Naive thymus-derived CD4-positive, alpha-beta T cell (primary cell): ENCODE measurements at regions of chr20 and their contacts with region 1.

Region 1: DNA sequence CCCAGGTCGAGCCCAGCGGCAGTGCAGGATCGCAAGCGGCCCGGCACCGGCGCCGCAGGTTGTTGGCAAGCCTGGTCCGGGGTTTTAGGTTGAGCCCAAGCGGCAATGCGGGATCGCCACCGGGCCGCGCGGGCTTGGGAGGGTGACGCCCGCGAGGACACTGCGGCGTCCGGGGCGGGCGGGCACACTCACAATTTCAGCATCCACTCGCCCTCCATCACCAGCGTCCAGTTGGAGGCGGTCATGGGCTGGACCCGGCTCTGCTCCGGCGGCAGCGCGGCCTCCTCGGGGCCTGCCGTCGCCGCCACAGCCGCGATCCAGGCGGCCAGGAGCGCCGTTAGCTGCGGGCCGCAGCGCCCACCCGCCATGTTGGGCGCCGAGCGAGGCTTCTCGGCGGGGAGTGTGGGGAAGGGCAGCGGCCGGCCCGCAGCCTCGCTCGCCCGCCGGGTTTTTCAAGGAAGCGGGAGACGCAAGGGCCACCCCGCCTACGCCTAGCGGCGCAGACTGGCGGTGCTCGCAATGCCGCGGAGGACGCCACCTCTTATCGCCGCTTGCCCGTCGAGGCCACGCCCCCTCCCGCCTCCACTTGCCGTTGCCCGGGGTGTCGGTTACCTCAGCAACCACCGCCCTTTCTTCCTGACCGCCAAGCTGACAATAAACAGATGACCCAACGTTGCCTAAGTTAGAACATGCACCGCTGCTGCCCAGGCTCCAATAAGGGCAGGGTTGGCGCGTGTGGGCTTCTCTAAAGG is at the start of gene TMX4:
- DNase-seq: peak; percentile 70 to 95 (median 78)
- ATAC-seq: peak; percentile 94
- H3K4me3 ChIP-seq: peak within 1 kb of the TSS; percentile 82
- H3K4me3 Mint-ChIP-seq: peak within 1 kb of the TSS in 9 of 10 donors; percentile 87 to 96 (median 94)
- H3K27ac ChIP-seq: peak within 1 kb of the TSS; percentile 90
- H3K27ac Mint-ChIP-seq: peak within 1 kb of the TSS; percentile 78 to 97 (median 87)
- H3K4me1 ChIP-seq: peaks cover 24% of the 10 kb centered on the region in 2 donors
- H3K4me1 Mint-ChIP-seq: peaks cover 16 to 43% (median 40%) of the 10 kb centered on the region in 7 donors
- H3K27me3 ChIP-seq: no peaks in the 10 kb centered on the region
- H3K27me3 Mint-ChIP-seq: peaks cover 0 to 8% (median 0%) of the 10 kb centered on the region in 5 donors
- total RNA-seq, gene TMX4: 32.1 to 45.5 (median 39.7) TPM

Region 2: GRCh38 chr20:7818477-7818876 is 200.9 kb before region 1 on chr20:
- CTCF ChIA-PET with region 1: no interaction called
- POLR2A ChIA-PET with region 1: no interaction called
- intact Hi-C with region 1: no loop called
- DNase-seq: no peak
- ATAC-seq: no peak
- H3K4me3 ChIP-seq: no peak overlapping the region
- H3K4me3 Mint-ChIP-seq: no peak overlapping the region
- H3K27ac ChIP-seq: no peak overlapping the region
- H3K27ac Mint-ChIP-seq: no peak overlapping the region
- H3K4me1 ChIP-seq: no peaks in the 10 kb centered on the region
- H3K4me1 Mint-ChIP-seq: no peaks in the 10 kb centered on the region
- H3K27me3 ChIP-seq: no peaks in the 10 kb centered on the region
- H3K27me3 Mint-ChIP-seq: peaks cover 0 to 2% (median 0%) of the 10 kb centered on the region in 5 donors

Region 3: DNA sequence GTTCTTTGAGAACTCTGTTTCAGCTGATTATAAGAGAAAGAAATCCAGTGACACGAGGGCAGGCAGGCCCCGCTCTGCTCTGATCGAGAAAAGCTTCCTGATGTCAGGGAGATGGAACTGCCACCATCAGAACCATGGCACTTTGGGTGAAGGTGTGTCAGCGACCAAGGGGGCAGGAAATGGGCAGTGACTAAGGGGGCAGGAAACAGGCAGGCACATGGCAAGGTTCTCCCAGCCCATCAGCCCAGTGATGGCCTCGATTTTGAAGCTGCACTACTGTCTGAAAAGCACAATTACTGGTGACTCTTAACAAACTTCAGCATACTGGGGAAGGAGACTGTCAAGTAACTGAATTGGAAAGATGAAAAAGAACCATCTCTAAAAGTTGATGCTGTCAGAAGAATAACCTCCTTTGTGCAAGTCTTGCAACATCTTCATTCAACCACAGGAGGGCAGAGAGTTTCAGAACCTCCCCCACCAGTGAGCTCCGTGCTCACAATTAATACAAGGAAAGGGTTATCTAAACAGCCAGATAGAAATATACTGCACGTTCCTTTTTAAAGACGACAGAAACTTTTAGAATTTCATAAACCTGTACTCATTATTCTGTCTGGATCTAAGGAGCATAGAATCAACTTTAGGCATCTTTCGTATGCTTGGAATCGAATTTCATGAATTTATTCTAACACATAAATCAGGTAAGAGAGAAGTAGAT is 38.9 kb before region 1 on chr20:
- CTCF ChIA-PET with region 1: no interaction called
- POLR2A ChIA-PET with region 1: no interaction called
- intact Hi-C with region 1: loop called in 1 of 2 experiments (anchors 1 kb)
- DNase-seq: peak in 5 of 9 donors; percentile 0 to 21 (median 1)
- ATAC-seq: no peak
- H3K4me3 ChIP-seq: no peak overlapping the region
- H3K4me3 Mint-ChIP-seq: no peak overlapping the region
- H3K27ac ChIP-seq: no peak overlapping the region
- H3K27ac Mint-ChIP-seq: peak overlapping the region in 7 of 9 donors; percentile 19 to 78 (median 44)
- H3K4me1 ChIP-seq: no peaks in the 10 kb centered on the region
- H3K4me1 Mint-ChIP-seq: peaks cover 8 to 19% (median 10%) of the 10 kb centered on the region in 7 donors
- H3K27me3 ChIP-seq: no peaks in the 10 kb centered on the region
- H3K27me3 Mint-ChIP-seq: no peaks in the 10 kb centered on the region

Region 4: GRCh38 chr20:8007490-8007889 is 11.9 kb before region 1 on chr20:
- CTCF ChIA-PET with region 1: interaction called, 4 read pairs
- POLR2A ChIA-PET with region 1: interaction called, 3 read pairs
- intact Hi-C with region 1: loop called in 1 of 2 experiments (anchors 1 kb)
- DNase-seq: no peak
- ATAC-seq: no peak
- H3K4me3 ChIP-seq: no peak overlapping the region
- H3K4me3 Mint-ChIP-seq: no peak overlapping the region
- H3K27ac ChIP-seq: no peak overlapping the region
- H3K27ac Mint-ChIP-seq: no peak overlapping the region
- H3K4me1 ChIP-seq: no peaks in the 10 kb centered on the region
- H3K4me1 Mint-ChIP-seq: peaks cover 4 to 28% (median 13%) of the 10 kb centered on the region in 7 donors
- H3K27me3 ChIP-seq: no peaks in the 10 kb centered on the region
- H3K27me3 Mint-ChIP-seq: no peaks in the 10 kb centered on the region

Region 5: GRCh38 chr20:8043687-8044282 is 24.4 kb after region 1 on chr20:
- CTCF ChIA-PET with region 1: interaction called, 6 read pairs
- POLR2A ChIA-PET with region 1: no interaction called
- intact Hi-C with region 1: loop called in 1 of 2 experiments (anchors 1 kb)
- DNase-seq: peak in 7 of 9 donors; percentile 35 to 73 (median 58)
- ATAC-seq: peak; percentile 87
- H3K4me3 ChIP-seq: no peak overlapping the region
- H3K4me3 Mint-ChIP-seq: no peak overlapping the region
- H3K27ac ChIP-seq: no peak overlapping the region
- H3K27ac Mint-ChIP-seq: no peak overlapping the region
- H3K4me1 ChIP-seq: no peaks in the 10 kb centered on the region
- H3K4me1 Mint-ChIP-seq: peaks cover 0 to 4% (median 3%) of the 10 kb centered on the region in 7 donors
- H3K27me3 ChIP-seq: no peaks in the 10 kb centered on the region
- H3K27me3 Mint-ChIP-seq: peaks cover 4 to 20% (median 11%) of the 10 kb centered on the region in 5 donors

Region 6: GRCh38 chr20:8073116-8073832 is 53.9 kb after region 1 on chr20:
- CTCF ChIA-PET with region 1: no interaction called
- POLR2A ChIA-PET with region 1: no interaction called
- intact Hi-C with region 1: loop called in 1 of 2 experiments (anchors 5 kb)
- DNase-seq: peak in 7 of 9 donors; percentile 10 to 51 (median 40)
- ATAC-seq: peak; percentile 88
- H3K4me3 ChIP-seq: no peak overlapping the region
- H3K4me3 Mint-ChIP-seq: peak overlapping the region in 6 of 10 donors; percentile 3 to 40 (median 18)
- H3K27ac ChIP-seq: peak overlapping the region; percentile 16
- H3K27ac Mint-ChIP-seq: peak overlapping the region; percentile 14 to 95 (median 87)
- H3K4me1 ChIP-seq: peaks cover 0 to 7% of the 10 kb centered on the region in 2 donors
- H3K4me1 Mint-ChIP-seq: peaks cover 6 to 20% (median 10%) of the 10 kb centered on the region in 7 donors
- H3K27me3 ChIP-seq: no peaks in the 10 kb centered on the region
- H3K27me3 Mint-ChIP-seq: no peaks in the 10 kb centered on the region

Region 7: DNA sequence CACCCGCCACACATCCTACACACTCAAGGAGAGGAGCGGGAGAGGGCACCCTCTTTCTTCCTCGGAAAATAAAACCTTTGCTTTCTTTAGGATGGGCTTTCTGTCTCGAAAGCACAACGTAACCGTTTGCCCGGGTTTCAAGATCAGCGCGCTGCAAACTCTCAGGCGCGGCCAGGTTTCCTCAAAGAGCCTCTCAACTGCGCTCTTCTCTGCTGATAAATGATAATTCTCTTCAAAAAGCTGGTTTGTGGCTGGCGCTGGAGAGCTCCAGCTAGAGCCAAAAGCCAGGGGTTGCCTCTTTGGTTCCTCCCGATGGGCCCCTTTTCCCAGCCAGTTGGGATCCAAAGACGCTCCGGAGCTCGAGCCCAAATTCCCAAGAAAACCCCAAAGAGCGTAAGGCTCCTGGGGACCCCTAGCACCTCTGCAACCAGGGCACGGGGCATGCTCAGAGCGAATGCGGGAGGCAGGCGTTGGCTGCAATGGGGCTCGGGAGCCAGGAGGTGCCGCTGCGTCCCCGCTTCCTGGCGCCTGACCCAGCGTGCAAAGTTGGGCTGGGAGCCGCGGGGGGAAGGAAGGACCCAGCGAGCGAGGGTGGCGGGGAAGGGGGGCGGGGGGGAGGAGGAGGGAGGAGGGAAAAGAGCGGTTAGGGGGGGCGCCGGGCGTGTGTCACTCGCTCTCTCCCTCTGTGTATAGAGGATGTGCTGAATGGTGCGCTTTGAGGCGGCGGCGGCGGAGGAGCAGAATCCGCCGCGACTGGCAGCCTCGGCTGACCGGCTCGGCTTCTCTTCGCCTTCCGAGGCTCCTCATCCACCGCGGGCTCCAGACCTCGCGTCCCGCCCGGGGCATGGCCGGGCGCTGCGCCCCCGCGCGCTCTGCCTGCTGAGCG is 112.4 kb after region 1 on chr20 and contains the start of gene PLCB1:
- CTCF ChIA-PET with region 1: no interaction called
- POLR2A ChIA-PET with region 1: no interaction called
- intact Hi-C with region 1: loop called in 1 of 2 experiments (anchors 5 kb)
- DNase-seq: peak; percentile 59 to 82 (median 70)
- ATAC-seq: peak; percentile 93
- H3K4me3 ChIP-seq: peak within 1 kb of the TSS; percentile 57
- H3K4me3 Mint-ChIP-seq: peak within 1 kb of the TSS; percentile 67 to 87 (median 80)
- H3K27ac ChIP-seq: no peak within 1 kb of the TSS
- H3K27ac Mint-ChIP-seq: peak within 1 kb of the TSS in 2 of 9 donors; percentile 22 to 42
- H3K4me1 ChIP-seq: peaks cover 6 to 16% of the 10 kb centered on the region in 2 donors
- H3K4me1 Mint-ChIP-seq: peaks cover 7 to 20% (median 9%) of the 10 kb centered on the region in 7 donors
- H3K27me3 ChIP-seq: peaks cover 0 to 3% of the 10 kb centered on the region in 2 donors
- H3K27me3 Mint-ChIP-seq: peaks cover 13 to 54% (median 28%) of the 10 kb centered on the region in 5 donors
- total RNA-seq, gene PLCB1: 0.56 to 17.6 (median 2.3) TPM

Region 8: DNA sequence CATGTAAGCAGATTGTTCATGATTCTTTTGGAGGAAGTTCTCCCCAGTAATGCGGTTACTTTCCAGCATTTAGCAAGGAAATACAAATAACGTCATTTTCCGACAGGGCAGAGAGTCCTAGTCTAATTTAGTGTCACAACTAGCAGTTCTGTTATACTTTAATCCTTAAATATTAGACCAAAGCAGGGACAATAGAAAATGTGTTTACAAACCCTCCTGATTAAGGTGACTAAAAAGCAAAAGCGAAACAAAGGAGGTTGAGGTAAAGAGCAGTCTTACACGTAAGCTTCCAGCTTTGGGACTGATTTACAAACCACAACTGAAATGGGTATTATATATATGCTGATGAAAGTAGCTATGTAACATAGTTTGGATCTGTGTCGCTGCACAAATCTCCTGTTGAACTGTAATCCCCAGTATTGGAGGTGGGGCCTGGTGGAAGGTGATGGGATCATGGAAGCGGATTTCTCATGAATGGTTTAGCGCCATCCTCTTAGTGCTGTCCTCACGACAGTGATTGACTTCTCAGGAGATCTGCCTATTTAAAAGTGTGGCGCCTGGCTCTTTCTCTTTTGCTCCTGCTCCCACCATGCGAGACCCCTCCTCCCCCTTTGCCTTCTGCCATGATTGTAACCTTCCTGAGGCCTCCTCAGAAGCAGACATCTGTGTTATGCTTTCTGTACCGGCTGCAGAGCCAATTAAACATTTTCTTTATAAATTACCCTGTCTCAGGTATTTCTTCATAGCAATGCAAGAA is 194.6 kb after region 1 on chr20:
- CTCF ChIA-PET with region 1: no interaction called
- POLR2A ChIA-PET with region 1: no interaction called
- intact Hi-C with region 1: loop called in 1 of 2 experiments (anchors 5 kb)
- DNase-seq: peak in 7 of 9 donors; percentile 7 to 44 (median 20)
- ATAC-seq: peak; percentile 77
- H3K4me3 ChIP-seq: peak overlapping the region; percentile 34
- H3K4me3 Mint-ChIP-seq: peak overlapping the region; percentile 71 to 89 (median 82)
- H3K27ac ChIP-seq: peak overlapping the region; percentile 12
- H3K27ac Mint-ChIP-seq: peak overlapping the region; percentile 41 to 90 (median 80)
- H3K4me1 ChIP-seq: peaks cover 5 to 10% of the 10 kb centered on the region in 2 donors
- H3K4me1 Mint-ChIP-seq: peaks cover 12 to 39% (median 28%) of the 10 kb centered on the region in 7 donors
- H3K27me3 ChIP-seq: no peaks in the 10 kb centered on the region
- H3K27me3 Mint-ChIP-seq: peaks cover 0 to 12% (median 0%) of the 10 kb centered on the region in 5 donors